ENCODE measurements at regions of chr10 and their contacts with region 1.

Region 1: GRCh38 chr10:96513698-96514561 is at the start of gene TLL2:
- DNase-seq: peak; percentile 94
- H3K4me3 ChIP-seq: peak within 1 kb of the TSS; percentile 52 to 73
- H3K27ac ChIP-seq: peak within 1 kb of the TSS; percentile 2 to 50; a peak in 3 of 4 replicates
- H3K4me1 ChIP-seq: peaks cover 11 to 26% of the 10 kb centered on the region in 2 experiments; a peak in 3 of 4 replicates
- H3K27me3 ChIP-seq: no peaks in the 10 kb centered on the region; the same call in 1 of the 2 replicates
- CTCF ChIP-seq: peak; percentile 61
- EP300 ChIP-seq: no peak
- RAD21 ChIP-seq: peak; percentile 57
- polyA plus RNA-seq, gene TLL2: 0.28 and 0.36 TPM in 2 replicates

Region 2: GRCh38 chr10:96053985-96054384 is 459.9 kb before region 1 on chr10:
- CTCF ChIA-PET with region 1: no interaction called
- POLR2A ChIA-PET with region 1: no interaction called
- DNase-seq: no peak
- H3K4me3 ChIP-seq: no peak overlapping the region
- H3K27ac ChIP-seq: no peak overlapping the region
- H3K4me1 ChIP-seq: no peaks in the 10 kb centered on the region; a peak in 1 of 4 replicates
- H3K27me3 ChIP-seq: no peaks in the 10 kb centered on the region
- CTCF ChIP-seq: no peak
- EP300 ChIP-seq: no peak
- RAD21 ChIP-seq: no peak

Region 3: GRCh38 chr10:96374985-96375830 is 138.7 kb before region 1 on chr10:
- CTCF ChIA-PET with region 1: interaction called, 103 read pairs
- POLR2A ChIA-PET with region 1: no interaction called
- DNase-seq: peak; percentile 94
- H3K4me3 ChIP-seq: peak overlapping the region; percentile 44 to 56
- H3K27ac ChIP-seq: no peak overlapping the region
- H3K4me1 ChIP-seq: peaks cover 0 to 9% of the 10 kb centered on the region in 2 experiments; a peak in 1 of 4 replicates
- H3K27me3 ChIP-seq: no peaks in the 10 kb centered on the region
- CTCF ChIP-seq: peak; percentile 90
- EP300 ChIP-seq: no peak
- RAD21 ChIP-seq: peak; percentile 95

Region 4: DNA sequence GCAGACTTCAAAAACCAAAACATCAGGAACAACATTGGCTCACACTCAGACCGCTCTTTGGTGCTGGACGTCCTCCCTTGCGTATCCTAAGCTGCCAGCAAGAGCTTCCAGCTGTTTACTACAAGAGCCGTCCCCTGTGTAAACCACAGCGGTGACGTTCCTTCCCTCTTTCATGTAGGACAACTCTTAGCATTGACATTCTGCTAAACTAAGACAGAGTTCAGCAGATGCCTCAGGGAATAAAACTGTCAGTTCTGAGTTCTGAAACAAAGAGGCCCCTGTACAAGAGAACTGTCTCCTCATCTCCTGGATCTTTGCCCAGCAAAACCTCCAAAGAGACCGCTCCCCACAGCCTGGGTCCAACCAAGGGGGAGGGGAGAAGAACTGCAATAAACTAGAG is 97.3 kb before region 1 on chr10:
- CTCF ChIA-PET with region 1: interaction called, 14 read pairs
- POLR2A ChIA-PET with region 1: no interaction called
- DNase-seq: no peak
- H3K4me3 ChIP-seq: no peak overlapping the region
- H3K27ac ChIP-seq: no peak overlapping the region
- H3K4me1 ChIP-seq: peaks cover 0 to 21% of the 10 kb centered on the region in 2 experiments; a peak in 1 of 4 replicates
- H3K27me3 ChIP-seq: no peaks in the 10 kb centered on the region; the same call in 1 of the 2 replicates
- CTCF ChIP-seq: no peak
- EP300 ChIP-seq: no peak
- RAD21 ChIP-seq: no peak

Region 5: DNA sequence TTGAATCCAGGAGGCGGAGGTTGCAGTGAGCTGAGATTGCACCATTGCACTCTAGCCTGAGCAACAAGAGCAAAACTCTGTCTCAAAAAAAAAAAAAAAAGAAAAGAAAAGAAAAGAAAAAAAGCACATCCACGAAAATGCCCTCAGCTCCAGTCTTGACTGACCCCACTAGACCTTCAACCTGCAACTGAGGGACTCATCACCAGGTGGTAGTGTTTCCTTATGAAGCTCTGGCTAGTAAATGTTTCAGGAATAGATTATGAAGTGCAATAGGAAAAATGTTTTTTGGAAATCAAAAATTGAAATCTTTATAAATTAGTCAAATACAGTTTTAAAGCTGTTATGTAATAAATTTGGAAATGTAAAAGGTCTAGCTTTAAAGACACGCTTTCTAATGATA is 22.6 kb before region 1 on chr10:
- CTCF ChIA-PET with region 1: interaction called, 23 read pairs
- POLR2A ChIA-PET with region 1: no interaction called
- DNase-seq: peak; percentile 43
- H3K4me3 ChIP-seq: no peak overlapping the region
- H3K27ac ChIP-seq: no peak overlapping the region
- H3K4me1 ChIP-seq: no peaks in the 10 kb centered on the region
- H3K27me3 ChIP-seq: no peaks in the 10 kb centered on the region
- CTCF ChIP-seq: peak; percentile 46
- EP300 ChIP-seq: no peak
- RAD21 ChIP-seq: peak; percentile 61

Region 6: GRCh38 chr10:96524741-96525140 is 10.8 kb after region 1 on chr10:
- CTCF ChIA-PET with region 1: interaction called, 11 read pairs
- POLR2A ChIA-PET with region 1: no interaction called
- DNase-seq: no peak
- H3K4me3 ChIP-seq: no peak overlapping the region
- H3K27ac ChIP-seq: no peak overlapping the region
- H3K4me1 ChIP-seq: peaks cover 0 to 2% of the 10 kb centered on the region in 2 experiments; a peak in 2 of 4 replicates
- H3K27me3 ChIP-seq: no peaks in the 10 kb centered on the region
- CTCF ChIP-seq: no peak
- EP300 ChIP-seq: no peak
- RAD21 ChIP-seq: no peak

Region 7: DNA sequence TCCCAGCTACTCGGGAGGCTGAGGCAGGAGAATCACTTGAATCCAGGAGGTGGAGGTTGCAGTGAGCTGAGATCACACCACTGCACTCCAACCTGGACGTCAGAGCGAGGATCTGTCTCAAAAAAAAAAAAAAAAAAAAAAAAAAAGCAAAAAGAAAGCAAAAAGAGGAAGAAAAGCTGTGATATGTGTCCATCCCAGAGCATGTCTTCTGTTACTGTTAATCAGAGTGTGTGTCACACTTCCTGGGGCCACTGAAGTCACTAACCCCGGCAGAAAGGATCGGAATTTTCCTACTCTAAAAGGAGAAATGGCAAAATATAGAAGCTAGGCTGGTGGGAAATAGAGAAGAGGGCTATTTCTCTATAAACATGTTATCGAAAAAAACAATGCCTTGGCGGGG is 194.5 kb after region 1 on chr10:
- CTCF ChIA-PET with region 1: no interaction called
- POLR2A ChIA-PET with region 1: no interaction called
- DNase-seq: no peak
- H3K4me3 ChIP-seq: no peak overlapping the region
- H3K27ac ChIP-seq: no peak overlapping the region
- H3K4me1 ChIP-seq: no peaks in the 10 kb centered on the region
- H3K27me3 ChIP-seq: no peaks in the 10 kb centered on the region
- CTCF ChIP-seq: no peak
- EP300 ChIP-seq: no peak
- RAD21 ChIP-seq: no peak